ENCODE measurements at regions of chr11 and their contacts with region 1.

Region 1: DNA sequence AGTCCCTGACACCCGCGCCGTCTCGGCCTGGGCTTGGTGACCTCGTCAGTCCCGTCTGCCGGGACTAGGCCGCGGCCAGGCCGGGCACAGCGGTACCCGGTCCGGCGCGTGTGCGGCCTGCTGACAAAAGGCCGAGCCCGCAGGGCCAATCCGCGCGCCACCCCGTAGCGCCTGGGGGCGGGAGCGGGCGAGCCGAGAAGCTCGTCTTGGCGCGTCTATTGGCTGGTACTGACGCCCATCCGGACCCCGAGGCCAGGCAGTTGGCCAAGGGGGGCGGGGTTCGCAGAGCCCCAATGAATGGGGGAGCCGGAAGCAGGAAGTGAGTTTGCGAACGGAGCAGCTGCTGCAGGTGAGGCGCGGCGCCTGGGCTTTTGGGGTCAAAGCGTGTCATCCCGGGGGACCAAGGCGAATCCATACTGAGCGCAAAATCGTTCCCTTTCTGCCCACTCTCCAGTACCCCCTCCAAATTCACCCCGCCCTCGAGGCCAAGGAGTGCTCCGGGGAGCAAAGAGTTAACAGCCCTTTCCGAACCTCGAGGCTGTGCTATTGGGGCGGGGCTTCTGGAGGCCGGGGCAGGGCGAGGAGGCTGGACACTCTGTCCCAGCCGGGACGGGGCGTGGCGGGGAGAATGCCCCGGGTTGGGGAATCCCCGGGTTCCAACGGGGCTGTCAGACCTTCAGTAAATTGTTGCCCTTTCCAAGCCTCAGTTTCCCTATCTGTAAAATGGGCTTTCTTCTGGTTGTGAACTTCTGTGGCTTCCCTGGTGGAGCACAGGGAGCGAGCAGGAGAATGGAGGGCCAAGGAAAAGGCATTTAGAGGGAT is at the start of gene DPP3:
- DNase-seq: peak; percentile 99
- H3K4me3 ChIP-seq: peak within 1 kb of the TSS; percentile 64 to 82
- H3K27ac ChIP-seq: peak within 1 kb of the TSS; percentile 85 to 93
- H3K4me1 ChIP-seq: peaks cover 0 to 15% of the 10 kb centered on the region in 2 experiments; a peak in 2 of 4 replicates
- H3K27me3 ChIP-seq: no peaks in the 10 kb centered on the region
- CTCF ChIP-seq: no peak
- EP300 ChIP-seq: no peak
- RAD21 ChIP-seq: no peak
- polyA plus RNA-seq, gene DPP3: 62.1 and 70.6 TPM in 2 replicates

Region 2: GRCh38 chr11:66288671-66289547 is 191.4 kb before region 1 on chr11 and contains the start of gene YIF1A:
- CTCF ChIA-PET with region 1: no interaction called
- POLR2A ChIA-PET with region 1: no interaction called
- DNase-seq: peak; percentile 98
- H3K4me3 ChIP-seq: peak within 1 kb of the TSS; percentile 88 to 90
- H3K27ac ChIP-seq: peak within 1 kb of the TSS; percentile 93 to 97
- H3K4me1 ChIP-seq: peaks cover 7 to 36% of the 10 kb centered on the region in 2 experiments; a peak in 2 of 4 replicates
- H3K27me3 ChIP-seq: no peaks in the 10 kb centered on the region
- CTCF ChIP-seq: no peak
- EP300 ChIP-seq: no peak
- RAD21 ChIP-seq: no peak
- polyA plus RNA-seq, gene YIF1A: 115 and 123 TPM in 2 replicates

Region 3: GRCh38 chr11:66299186-66299585 is 181.1 kb before region 1 on chr11:
- CTCF ChIA-PET with region 1: no interaction called
- POLR2A ChIA-PET with region 1: no interaction called
- DNase-seq: no peak
- H3K4me3 ChIP-seq: no peak overlapping the region
- H3K27ac ChIP-seq: no peak overlapping the region
- H3K4me1 ChIP-seq: no peaks in the 10 kb centered on the region
- H3K27me3 ChIP-seq: no peaks in the 10 kb centered on the region
- CTCF ChIP-seq: no peak
- EP300 ChIP-seq: no peak
- RAD21 ChIP-seq: no peak

Region 4: GRCh38 chr11:66429983-66430602 is 50.2 kb before region 1 on chr11:
- CTCF ChIA-PET with region 1: interaction called, 10 read pairs
- POLR2A ChIA-PET with region 1: no interaction called
- DNase-seq: peak; percentile 88
- H3K4me3 ChIP-seq: no peak overlapping the region; a peak in 1 of 4 replicates
- H3K27ac ChIP-seq: no peak overlapping the region
- H3K4me1 ChIP-seq: no peaks in the 10 kb centered on the region
- H3K27me3 ChIP-seq: no peaks in the 10 kb centered on the region
- CTCF ChIP-seq: peak; percentile 84
- EP300 ChIP-seq: no peak
- RAD21 ChIP-seq: peak; percentile 93

Region 5: GRCh38 chr11:66466225-66467027 is 13.9 kb before region 1 on chr11 and contains the start of gene PELI3:
- CTCF ChIA-PET with region 1: interaction called, 32 read pairs
- POLR2A ChIA-PET with region 1: interaction called, 17 read pairs
- DNase-seq: peak; percentile 98
- H3K4me3 ChIP-seq: peak within 1 kb of the TSS; percentile 76
- H3K27ac ChIP-seq: peak within 1 kb of the TSS; percentile 46 to 78; a peak in 3 of 4 replicates
- H3K4me1 ChIP-seq: peaks cover 5 to 18% of the 10 kb centered on the region in 2 experiments; a peak in 3 of 4 replicates
- H3K27me3 ChIP-seq: no peaks in the 10 kb centered on the region
- CTCF ChIP-seq: no peak
- EP300 ChIP-seq: no peak
- RAD21 ChIP-seq: no peak
- polyA plus RNA-seq, gene PELI3: 6.5 and 7.0 TPM in 2 replicates

Region 6: GRCh38 chr11:66616379-66617154 is 136.2 kb after region 1 on chr11 and contains the start of gene RBM14:
- CTCF ChIA-PET with region 1: no interaction called
- POLR2A ChIA-PET with region 1: no interaction called
- DNase-seq: peak; percentile 99
- H3K4me3 ChIP-seq: peak within 1 kb of the TSS; percentile 73 to 75
- H3K27ac ChIP-seq: peak within 1 kb of the TSS; percentile 87 to 91
- H3K4me1 ChIP-seq: peaks cover 8 to 11% of the 10 kb centered on the region in 2 experiments; a peak in 3 of 4 replicates
- H3K27me3 ChIP-seq: no peaks in the 10 kb centered on the region
- CTCF ChIP-seq: no peak
- EP300 ChIP-seq: no peak
- RAD21 ChIP-seq: no peak
- polyA plus RNA-seq, gene RBM14: 17.6 and 19.8 TPM in 2 replicates